ENCODE measurements at regions of chrX and their contacts with region 1.

Region 1: DNA sequence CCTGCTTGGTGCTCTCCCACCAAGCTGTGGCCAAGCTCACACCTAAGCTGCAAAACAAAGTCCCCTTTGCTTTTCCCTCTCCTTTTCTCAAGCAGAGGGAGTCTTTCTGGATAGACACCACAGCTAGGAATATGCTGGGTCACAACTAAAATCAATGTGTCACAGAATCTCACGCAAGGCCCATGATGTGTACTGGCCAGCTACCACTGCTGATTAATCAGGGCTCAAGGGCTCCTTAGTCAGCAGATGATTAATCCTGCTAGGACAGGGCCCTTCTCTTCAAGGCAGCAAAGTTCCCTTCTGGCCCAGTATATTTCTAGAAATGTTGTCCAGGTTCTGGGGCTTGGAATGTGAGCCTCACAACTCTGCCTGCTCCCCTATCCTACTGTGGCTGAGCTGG is 32.0 kb upstream of the TENT5D start:
- DNase-seq: no peak
- ATAC-seq: no peak
- H3K4me3 ChIP-seq: no peak overlapping the region
- H3K27ac ChIP-seq: no peak overlapping the region
- H3K4me1 ChIP-seq: no peaks in the 10 kb centered on the region
- H3K27me3 ChIP-seq: no peaks in the 10 kb centered on the region
- CTCF ChIP-seq: no peak
- POLR2A ChIP-seq: no peak

Region 2: DNA sequence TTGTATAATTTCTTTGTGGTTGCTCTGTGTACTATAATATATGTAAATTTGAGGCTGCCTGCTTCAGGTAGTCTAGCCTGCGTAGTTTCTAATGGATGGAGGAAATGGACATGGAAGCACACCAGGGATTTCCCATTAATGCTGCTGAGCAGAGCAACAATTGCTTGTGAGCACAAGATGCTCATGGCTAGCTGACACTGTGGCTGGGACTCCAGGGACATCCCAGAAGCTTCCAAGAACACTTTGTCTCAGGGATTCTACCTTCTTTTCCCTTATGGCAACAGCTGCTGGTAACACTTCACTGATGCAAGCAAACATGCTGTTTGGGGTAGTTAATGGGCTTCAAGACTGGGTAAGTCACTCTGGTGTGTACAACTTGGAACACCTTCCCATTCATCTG is 98.1 kb after region 1 on chrX:
- in situ Hi-C with region 1: loop called in 1 of 4 experiments (anchors 25 kb)
- intact Hi-C with region 1: no loop called
- DNase-seq: peak; percentile 2 to 56
- ATAC-seq: peak; percentile 39 to 50
- H3K4me3 ChIP-seq: no peak overlapping the region
- H3K27ac ChIP-seq: no peak overlapping the region
- H3K4me1 ChIP-seq: no peaks in the 10 kb centered on the region
- H3K27me3 ChIP-seq: no peaks in the 10 kb centered on the region
- CTCF ChIP-seq: no peak
- POLR2A ChIP-seq: no peak

Region 3: DNA sequence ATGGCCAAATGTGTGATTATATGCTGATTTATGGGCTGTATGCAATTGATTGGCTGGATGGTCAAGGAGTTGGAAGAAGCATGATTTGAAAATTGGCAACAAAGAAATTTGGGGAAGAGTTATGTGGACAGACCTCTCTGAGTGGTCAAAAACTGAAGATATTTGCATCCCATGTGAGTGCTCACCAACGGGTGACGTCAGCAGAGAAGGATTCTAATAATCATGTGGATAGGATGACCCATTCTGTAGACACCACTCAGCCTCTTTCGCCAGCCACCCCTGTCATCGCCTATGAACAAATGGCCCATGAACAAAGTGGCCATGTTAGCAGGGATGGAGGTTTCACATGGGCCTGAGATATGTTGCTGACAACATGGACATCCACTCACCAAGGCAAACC is 135.4 kb after region 1 on chrX:
- in situ Hi-C with region 1: no loop called
- intact Hi-C with region 1: no loop called
- DNase-seq: no peak
- ATAC-seq: no peak
- H3K4me3 ChIP-seq: no peak overlapping the region
- H3K27ac ChIP-seq: no peak overlapping the region
- H3K4me1 ChIP-seq: no peaks in the 10 kb centered on the region
- H3K27me3 ChIP-seq: no peaks in the 10 kb centered on the region
- CTCF ChIP-seq: no peak
- POLR2A ChIP-seq: no peak

Measured in gastrocnemius medialis (tissue), 4 donors.